Common myeloid progenitor, CD34-positive (primary cell): ENCODE measurements at regions of chr6 and their contacts with region 1.

Region 1: DNA sequence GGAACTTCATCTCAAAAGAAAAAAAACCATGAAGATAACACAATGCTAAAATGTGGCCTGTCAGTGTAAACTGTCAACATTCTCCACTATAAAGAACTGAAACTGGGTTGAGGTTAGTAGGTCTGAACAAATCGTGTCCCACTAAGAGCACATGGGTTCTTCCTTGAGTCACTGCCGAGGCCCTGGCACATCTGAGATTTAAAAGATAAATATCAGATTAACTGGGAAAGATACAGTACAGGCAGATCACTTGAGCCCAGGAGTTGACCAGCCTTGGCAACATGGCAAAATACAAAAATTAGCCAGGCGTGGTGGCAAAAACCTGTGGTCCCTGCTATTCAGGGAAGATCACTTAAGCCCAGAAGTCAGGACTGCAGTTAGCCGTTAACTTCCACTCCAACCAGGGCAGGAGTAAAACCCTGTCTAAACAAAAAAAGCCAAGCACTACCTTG is 5.6 kb downstream of the EEF1A1 start:
- DNase-seq: peak in 1 of 3 donors; percentile 31
- H3K4me3 ChIP-seq: no peak overlapping the region
- H3K27ac ChIP-seq: no peak overlapping the region
- H3K4me1 ChIP-seq: peaks cover 10 to 30% (median 21%) of the 10 kb centered on the region in 4 experiments
- H3K27me3 ChIP-seq: no peaks in the 10 kb centered on the region

Region 2: DNA sequence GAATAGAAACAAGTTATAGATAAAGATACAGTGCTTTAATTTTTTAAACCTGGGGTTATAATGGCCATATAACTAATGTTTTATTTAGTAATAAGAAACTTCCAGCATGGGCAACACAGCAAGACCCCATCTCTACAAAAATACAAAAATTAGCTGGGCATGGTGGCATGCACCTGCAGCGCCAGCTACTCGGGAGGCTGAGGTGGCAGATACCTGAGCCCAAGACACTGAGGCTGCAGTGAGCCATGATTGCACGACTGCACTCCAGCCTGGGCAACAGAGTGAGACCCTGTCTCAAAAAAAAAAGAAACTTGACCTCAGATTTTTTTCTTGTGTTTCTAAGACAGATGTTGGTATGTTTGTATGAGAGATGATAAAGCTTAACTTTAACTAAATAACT is 17.3 kb before region 1 on chr6:
- CTCF ChIA-PET with region 1: interaction called, 23 read pairs
- POLR2A ChIA-PET with region 1: no interaction called
- DNase-seq: no peak
- H3K4me3 ChIP-seq: no peak overlapping the region
- H3K27ac ChIP-seq: no peak overlapping the region
- H3K4me1 ChIP-seq: no peaks in the 10 kb centered on the region
- H3K27me3 ChIP-seq: no peaks in the 10 kb centered on the region

Region 3: DNA sequence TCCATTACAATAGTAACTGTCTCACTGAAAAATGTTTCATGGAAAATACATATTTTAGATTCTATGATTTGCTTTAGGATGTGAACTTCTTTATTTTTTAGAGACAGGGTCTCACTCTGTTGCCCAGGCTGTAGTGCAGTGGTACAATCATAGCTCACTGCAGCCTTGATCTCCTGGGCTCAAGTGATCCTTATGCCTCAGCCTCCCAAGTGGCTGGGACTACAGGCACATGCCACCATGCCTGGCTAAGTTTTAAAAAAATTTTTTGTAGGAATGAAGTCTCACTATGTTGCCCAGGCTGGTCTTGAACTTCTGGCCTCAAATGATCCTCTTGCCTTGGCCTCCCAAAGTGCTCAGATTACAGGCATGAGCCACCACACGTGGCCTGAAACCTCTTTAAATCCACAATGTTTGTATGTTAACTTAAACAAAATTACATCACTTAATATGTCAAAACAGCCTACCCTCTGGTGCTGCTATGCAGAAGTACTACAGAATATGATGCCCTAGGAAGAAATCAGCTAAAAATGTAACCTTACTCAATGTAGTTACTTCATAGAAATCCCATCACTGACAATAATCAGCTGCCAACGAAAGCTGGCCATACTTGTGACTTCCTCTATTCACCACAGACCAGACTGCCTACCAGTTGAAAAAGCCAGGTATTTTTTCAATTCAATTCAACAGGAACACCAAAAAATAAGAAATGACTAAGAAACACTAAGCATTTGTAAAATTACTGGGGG is 12.0 kb before region 1 on chr6:
- CTCF ChIA-PET with region 1: interaction called, 23 read pairs
- POLR2A ChIA-PET with region 1: no interaction called
- DNase-seq: peak in 1 of 3 donors; percentile 41
- H3K4me3 ChIP-seq: no peak overlapping the region
- H3K27ac ChIP-seq: no peak overlapping the region
- H3K4me1 ChIP-seq: no peaks in the 10 kb centered on the region
- H3K27me3 ChIP-seq: no peaks in the 10 kb centered on the region

Region 4: GRCh38 chr6:73610444-73611275 is 95.4 kb after region 1 on chr6:
- CTCF ChIA-PET with region 1: interaction called, 85 read pairs
- POLR2A ChIA-PET with region 1: interaction called, 12 read pairs
- DNase-seq: peak; percentile 54 to 75 (median 62)
- H3K4me3 ChIP-seq: no peak overlapping the region
- H3K27ac ChIP-seq: no peak overlapping the region
- H3K4me1 ChIP-seq: no peaks in the 10 kb centered on the region
- H3K27me3 ChIP-seq: no peaks in the 10 kb centered on the region